ENCODE measurements at regions of chr22 and their contacts with region 1.

Region 1: DNA sequence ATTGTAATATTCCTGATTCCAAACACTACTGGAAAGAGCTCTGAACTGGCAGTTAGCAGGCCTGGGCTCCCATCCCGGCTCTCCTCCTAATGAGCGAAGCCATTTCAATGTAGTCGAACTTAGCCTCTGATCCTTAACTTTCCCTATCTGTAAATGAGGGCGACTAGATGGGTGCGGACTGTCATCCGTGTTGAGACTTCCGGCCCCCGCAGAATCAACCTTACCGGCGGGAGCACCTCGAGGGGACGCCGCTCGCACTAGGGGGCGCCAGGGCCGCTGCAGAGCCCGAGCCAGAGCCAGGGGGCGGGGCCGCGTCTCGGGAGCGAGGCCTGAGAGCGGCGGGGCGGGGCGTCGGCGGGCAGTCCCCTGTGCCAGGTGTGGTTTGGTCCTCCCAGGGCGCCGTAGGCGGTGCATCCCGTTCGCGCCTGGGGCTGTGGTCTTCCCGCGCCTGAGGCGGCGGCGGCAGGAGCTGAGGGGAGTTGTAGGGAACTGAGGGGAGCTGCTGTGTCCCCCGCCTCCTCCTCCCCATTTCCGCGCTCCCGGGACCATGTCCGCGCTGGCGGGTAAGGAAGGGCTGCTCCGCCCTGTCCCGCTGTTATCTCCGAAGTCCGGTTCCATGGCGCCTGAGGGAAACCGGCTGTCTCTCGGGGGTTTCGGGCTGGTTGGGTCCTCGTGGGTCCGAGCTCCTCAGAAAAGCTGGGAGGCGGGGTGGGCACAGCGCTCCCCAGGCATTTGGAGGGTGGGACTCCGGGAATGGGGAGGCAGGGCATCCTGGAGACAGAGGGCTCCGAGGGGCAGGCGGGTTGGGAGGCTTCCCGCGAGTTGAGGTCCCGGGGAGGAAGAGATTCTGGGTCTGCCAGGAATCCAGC is at the start of gene LIMK2:
- DNase-seq: peak; percentile 90 to 99 (median 95)
- ATAC-seq: peak; percentile 100
- H3K4me3 ChIP-seq: peak within 1 kb of the TSS; percentile 83
- H3K4me3 Mint-ChIP-seq: peak within 1 kb of the TSS; percentile 86 to 91 (median 88)
- H3K27ac ChIP-seq: peak within 1 kb of the TSS; percentile 82
- H3K27ac Mint-ChIP-seq: peak within 1 kb of the TSS; percentile 82 to 96 (median 89)
- H3K4me1 ChIP-seq: peaks cover 23 to 31% of the 10 kb centered on the region in 2 donors
- H3K4me1 Mint-ChIP-seq: peaks cover 38 to 72% (median 51%) of the 10 kb centered on the region in 7 donors
- H3K27me3 ChIP-seq: no peaks in the 10 kb centered on the region
- H3K27me3 Mint-ChIP-seq: no peaks in the 10 kb centered on the region
- total RNA-seq, gene LIMK2: 18.3 to 49.9 (median 28.8) TPM

Region 2: DNA sequence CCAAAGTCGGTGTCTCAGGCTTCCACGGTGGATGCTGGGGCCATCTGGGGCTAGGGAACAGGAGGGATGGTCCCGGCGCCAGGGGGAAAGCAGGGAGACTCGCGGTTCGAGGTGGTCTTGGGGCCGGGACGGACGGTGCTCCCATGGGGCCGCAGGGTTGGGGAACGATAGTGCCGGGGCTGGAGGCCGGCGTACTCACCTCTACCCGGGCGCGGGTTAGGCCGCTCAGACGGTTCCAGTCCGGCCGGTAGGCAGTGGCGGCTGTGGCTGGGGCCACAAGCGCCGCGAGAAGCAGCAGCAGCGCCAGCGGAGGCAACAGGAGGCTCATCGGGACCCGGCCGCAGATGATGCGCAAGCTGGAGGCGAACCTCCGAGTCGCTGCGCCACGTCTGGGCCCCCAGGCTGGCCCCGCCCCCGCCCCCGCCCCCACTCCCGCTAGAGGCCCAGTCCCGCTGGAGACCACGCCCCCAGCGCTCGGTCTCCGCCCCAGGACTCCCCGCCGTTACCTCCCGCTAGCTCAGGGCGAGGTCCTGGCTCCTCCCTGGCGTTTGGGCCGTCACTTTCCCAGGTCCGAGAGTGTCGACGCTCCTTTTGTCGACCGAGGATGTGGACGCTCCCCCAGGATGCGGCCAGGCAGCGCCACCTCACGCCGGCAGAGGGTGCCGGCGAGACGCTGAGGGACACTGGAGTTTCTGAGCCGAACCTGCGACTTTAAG is 104.8 kb before region 1 on chr22 and contains the start of gene SELENOM:
- CTCF ChIA-PET with region 1: interaction called, 3 read pairs
- POLR2A ChIA-PET with region 1: interaction called, 5 read pairs
- intact Hi-C with region 1: loop called (anchors 1 kb)
- DNase-seq: peak; percentile 73 to 89 (median 84)
- ATAC-seq: peak; percentile 98
- H3K4me3 ChIP-seq: peak within 1 kb of the TSS; percentile 94
- H3K4me3 Mint-ChIP-seq: peak within 1 kb of the TSS; percentile 88 to 98 (median 93)
- H3K27ac ChIP-seq: peak within 1 kb of the TSS; percentile 86
- H3K27ac Mint-ChIP-seq: peak within 1 kb of the TSS; percentile 81 to 96 (median 90)
- H3K4me1 ChIP-seq: peaks cover 8 to 16% of the 10 kb centered on the region in 2 donors
- H3K4me1 Mint-ChIP-seq: peaks cover 12 to 26% (median 20%) of the 10 kb centered on the region in 7 donors
- H3K27me3 ChIP-seq: no peaks in the 10 kb centered on the region
- H3K27me3 Mint-ChIP-seq: peaks cover 0 to 3% (median 0%) of the 10 kb centered on the region in 5 donors
- total RNA-seq, gene SELENOM: 9.1 to 71.5 (median 68.6) TPM

Region 3: GRCh38 chr22:31122532-31123291 is 89.4 kb before region 1 on chr22 and contains the start of gene INPP5J:
- CTCF ChIA-PET with region 1: no interaction called
- POLR2A ChIA-PET with region 1: no interaction called
- intact Hi-C with region 1: no loop called
- DNase-seq: no peak
- ATAC-seq: no peak
- H3K4me3 ChIP-seq: no peak within 1 kb of the TSS
- H3K4me3 Mint-ChIP-seq: no peak within 1 kb of the TSS
- H3K27ac ChIP-seq: no peak within 1 kb of the TSS
- H3K27ac Mint-ChIP-seq: peak within 1 kb of the TSS in 2 of 9 donors; percentile 10 to 59
- H3K4me1 ChIP-seq: no peaks in the 10 kb centered on the region
- H3K4me1 Mint-ChIP-seq: peaks cover 0 to 4% (median 0%) of the 10 kb centered on the region in 7 donors
- H3K27me3 ChIP-seq: no peaks in the 10 kb centered on the region
- H3K27me3 Mint-ChIP-seq: peaks cover 0 to under 1% (median 0%) of the 10 kb centered on the region in 5 donors
- total RNA-seq, gene INPP5J: 0.24 to 0.81 (median 0.51) TPM in 4 of 5 experiments, not detected in the other

Region 4: DNA sequence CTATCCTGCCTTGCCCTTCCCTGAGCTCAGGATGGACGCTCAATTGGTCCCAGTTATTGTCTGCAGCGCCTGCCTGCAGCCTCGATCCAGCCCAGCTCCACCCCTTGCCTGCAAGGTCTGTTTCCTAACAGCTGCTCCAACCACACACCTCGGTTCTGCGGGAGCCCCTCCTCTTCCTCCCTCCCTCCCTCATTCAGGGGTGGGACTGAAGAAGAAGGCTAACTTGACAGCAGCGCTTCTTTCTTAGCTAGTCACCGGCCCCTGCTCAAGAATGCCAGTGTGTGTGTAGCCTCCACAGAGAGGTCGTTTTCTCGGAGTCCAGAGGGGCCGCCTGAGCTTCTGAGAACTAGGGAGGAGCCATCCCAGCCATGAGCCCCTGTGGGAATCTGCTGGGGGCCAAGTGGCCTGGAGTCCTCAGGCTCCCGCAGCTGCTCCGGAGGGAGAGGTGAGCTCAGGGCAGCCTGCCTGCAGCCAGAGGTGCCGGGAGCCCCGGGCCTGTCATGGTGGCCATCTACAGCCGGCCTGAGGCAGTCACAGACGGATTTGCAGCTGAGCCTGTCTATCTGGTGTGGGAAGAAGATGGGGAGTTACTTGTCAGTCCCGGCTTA is 36.1 kb after region 1 on chr22:
- CTCF ChIA-PET with region 1: interaction called, 4 read pairs
- POLR2A ChIA-PET with region 1: interaction called, 3 read pairs
- intact Hi-C with region 1: loop called (anchors 1 to 5 kb)
- DNase-seq: peak; percentile 33 to 78 (median 73)
- ATAC-seq: peak; percentile 100
- H3K4me3 ChIP-seq: no peak overlapping the region
- H3K4me3 Mint-ChIP-seq: peak overlapping the region; percentile 73 to 93 (median 83)
- H3K27ac ChIP-seq: no peak overlapping the region
- H3K27ac Mint-ChIP-seq: peak overlapping the region; percentile 20 to 87 (median 71)
- H3K4me1 ChIP-seq: peaks cover 9 to 17% of the 10 kb centered on the region in 2 donors
- H3K4me1 Mint-ChIP-seq: peaks cover 8 to 41% (median 28%) of the 10 kb centered on the region in 7 donors
- H3K27me3 ChIP-seq: no peaks in the 10 kb centered on the region
- H3K27me3 Mint-ChIP-seq: no peaks in the 10 kb centered on the region

Region 5: DNA sequence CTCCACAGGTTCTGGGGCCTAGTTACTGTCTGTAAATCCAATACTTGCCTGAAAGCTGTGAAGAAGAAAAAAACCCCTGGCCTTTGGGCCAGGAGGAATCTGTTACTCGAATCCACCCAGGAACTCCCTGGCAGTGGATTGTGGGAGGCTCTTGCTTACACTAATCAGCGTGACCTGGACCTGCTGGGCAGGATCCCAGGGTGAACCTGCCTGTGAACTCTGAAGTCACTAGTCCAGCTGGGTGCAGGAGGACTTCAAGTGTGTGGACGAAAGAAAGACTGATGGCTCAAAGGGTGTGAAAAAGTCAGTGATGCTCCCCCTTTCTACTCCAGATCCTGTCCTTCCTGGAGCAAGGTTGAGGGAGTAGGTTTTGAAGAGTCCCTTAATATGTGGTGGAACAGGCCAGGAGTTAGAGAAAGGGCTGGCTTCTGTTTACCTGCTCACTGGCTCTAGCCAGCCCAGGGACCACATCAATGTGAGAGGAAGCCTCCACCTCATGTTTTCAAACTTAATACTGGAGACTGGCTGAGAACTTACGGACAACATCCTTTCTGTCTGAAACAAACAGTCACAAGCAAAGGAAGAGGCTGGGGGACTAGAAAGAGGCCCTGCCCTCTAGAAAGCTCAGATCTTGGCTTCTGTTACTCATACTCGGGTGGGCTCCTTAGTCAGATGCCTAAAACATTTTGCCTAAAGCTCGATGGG is 66.7 kb after region 1 on chr22:
- CTCF ChIA-PET with region 1: interaction called, 31 read pairs
- POLR2A ChIA-PET with region 1: interaction called, 18 read pairs
- intact Hi-C with region 1: loop called in 1 of 2 experiments (anchors 1 kb)
- DNase-seq: peak in 7 of 9 donors; percentile 67 to 85 (median 79)
- ATAC-seq: peak; percentile 75
- H3K4me3 ChIP-seq: peak overlapping the region; percentile 35
- H3K4me3 Mint-ChIP-seq: peak overlapping the region; percentile 74 to 97 (median 80)
- H3K27ac ChIP-seq: peak overlapping the region; percentile 100
- H3K27ac Mint-ChIP-seq: peak overlapping the region; percentile 96 to 100 (median 99)
- H3K4me1 ChIP-seq: peaks cover 33 to 94% of the 10 kb centered on the region in 2 donors
- H3K4me1 Mint-ChIP-seq: peaks cover 52 to 98% (median 94%) of the 10 kb centered on the region in 7 donors
- H3K27me3 ChIP-seq: no peaks in the 10 kb centered on the region
- H3K27me3 Mint-ChIP-seq: no peaks in the 10 kb centered on the region

Region 6: GRCh38 chr22:31399211-31400028 is 187.3 kb after region 1 on chr22 and contains the start of gene DRG1:
- CTCF ChIA-PET with region 1: no interaction called
- POLR2A ChIA-PET with region 1: no interaction called
- intact Hi-C with region 1: loop called (anchors 1 kb)
- DNase-seq: peak; percentile 90 to 98 (median 93)
- ATAC-seq: peak; percentile 99
- H3K4me3 ChIP-seq: peak within 1 kb of the TSS; percentile 88
- H3K4me3 Mint-ChIP-seq: peak within 1 kb of the TSS; percentile 92 to 99 (median 96)
- H3K27ac ChIP-seq: peak within 1 kb of the TSS; percentile 91
- H3K27ac Mint-ChIP-seq: peak within 1 kb of the TSS; percentile 85 to 97 (median 94)
- H3K4me1 ChIP-seq: peaks cover 10 to 15% of the 10 kb centered on the region in 2 donors
- H3K4me1 Mint-ChIP-seq: peaks cover 5 to 35% (median 22%) of the 10 kb centered on the region in 7 donors
- H3K27me3 ChIP-seq: no peaks in the 10 kb centered on the region
- H3K27me3 Mint-ChIP-seq: no peaks in the 10 kb centered on the region
- total RNA-seq, gene DRG1: 53.3 to 109 (median 84.4) TPM

Region 7: DNA sequence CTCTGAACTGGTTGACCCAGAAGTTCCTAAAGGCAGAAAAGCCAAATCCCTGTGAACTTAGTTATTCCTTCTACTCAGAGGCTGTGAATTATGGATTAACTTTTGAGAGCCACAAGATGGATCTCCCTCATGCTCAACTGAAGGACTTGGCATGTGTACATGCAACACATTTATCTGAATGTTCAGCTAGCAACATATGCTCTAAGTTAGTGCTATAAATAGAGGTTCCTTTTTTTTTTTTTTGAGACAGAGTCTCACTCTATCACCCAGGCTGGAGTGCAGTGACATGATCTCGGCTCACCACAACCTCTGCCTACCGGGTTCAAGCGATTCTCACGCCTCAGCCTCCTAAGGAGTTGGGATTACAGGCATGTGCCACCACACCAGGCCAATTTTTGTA is 237.4 kb after region 1 on chr22:
- CTCF ChIA-PET with region 1: no interaction called
- POLR2A ChIA-PET with region 1: no interaction called
- intact Hi-C with region 1: no loop called
- DNase-seq: no peak
- ATAC-seq: no peak
- H3K4me3 ChIP-seq: no peak overlapping the region
- H3K4me3 Mint-ChIP-seq: no peak overlapping the region
- H3K27ac ChIP-seq: no peak overlapping the region
- H3K27ac Mint-ChIP-seq: peak overlapping the region in 1 of 9 donors; percentile 49
- H3K4me1 ChIP-seq: no peaks in the 10 kb centered on the region
- H3K4me1 Mint-ChIP-seq: peaks cover 0 to 7% (median 0%) of the 10 kb centered on the region in 7 donors
- H3K27me3 ChIP-seq: no peaks in the 10 kb centered on the region
- H3K27me3 Mint-ChIP-seq: no peaks in the 10 kb centered on the region